ENCODE measurements at regions of chr1 and their contacts with region 1.

Region 1: DNA sequence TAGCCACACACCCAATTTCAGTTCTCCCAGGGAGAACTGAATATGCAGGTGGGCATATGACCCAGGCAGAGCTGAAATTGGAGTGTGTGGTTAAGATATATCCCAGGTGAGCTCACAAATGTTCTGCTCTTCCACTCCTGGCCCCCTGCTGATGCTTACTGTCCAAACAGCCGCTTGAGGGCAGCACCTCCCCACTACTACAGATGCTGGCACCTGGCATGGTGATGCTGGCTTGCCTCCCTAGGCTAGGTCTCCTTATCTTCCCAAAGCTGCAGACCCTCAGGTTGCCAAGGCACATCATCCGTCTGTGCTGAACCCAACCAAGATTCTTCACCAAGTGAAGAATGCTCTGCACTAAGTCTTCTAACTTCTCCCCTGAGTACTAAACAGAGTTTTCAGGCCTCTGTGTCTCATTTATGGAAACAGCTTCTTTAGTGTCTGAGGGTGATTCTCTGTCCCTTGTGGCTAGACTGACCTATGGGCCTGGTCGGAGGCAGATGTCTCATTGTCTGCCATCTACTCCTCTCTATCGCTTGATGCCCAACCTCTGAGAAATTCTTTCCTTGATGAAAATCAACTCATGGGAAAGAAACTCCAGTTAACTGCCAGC is 27.2 kb downstream of the XCL1 start:
- DNase-seq: peak; percentile 78

Region 2: DNA sequence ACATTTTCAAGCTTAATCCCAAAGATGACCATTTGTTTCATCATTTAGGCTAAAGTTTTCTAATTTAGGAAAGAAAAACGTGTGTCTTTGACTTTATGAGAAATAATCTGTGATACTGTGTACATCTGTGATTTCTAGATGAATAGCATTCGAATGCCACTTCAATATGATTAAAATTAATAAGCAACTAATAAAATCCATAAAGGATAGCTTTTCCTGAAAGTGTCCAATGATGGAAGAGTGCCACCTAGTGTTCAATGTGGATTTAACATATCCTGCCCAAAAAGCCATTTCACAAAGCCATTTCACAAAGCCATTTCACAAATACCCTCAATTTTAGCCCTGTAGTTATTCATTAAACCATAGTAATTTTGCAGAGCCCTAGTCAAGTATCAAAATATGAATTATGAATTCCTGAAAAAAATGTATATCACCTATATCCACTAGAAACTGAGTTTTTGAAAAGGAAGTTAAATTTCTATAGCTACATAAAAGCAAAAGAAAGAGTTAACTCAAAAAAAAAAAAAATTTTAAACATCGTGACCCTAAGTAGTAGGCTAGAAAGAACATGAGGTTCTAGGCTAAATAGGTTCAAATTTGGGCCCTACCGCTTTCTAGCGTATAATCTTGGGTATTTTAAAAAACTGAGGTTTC is 744.9 kb after region 1 on chr1:
- CTCF ChIA-PET with region 1: interaction called, 29 read pairs
- POLR2A ChIA-PET with region 1: no interaction called
- DNase-seq: peak; percentile 32